ENCODE measurements at regions of chr19 and their contacts with region 1.

Region 1: DNA sequence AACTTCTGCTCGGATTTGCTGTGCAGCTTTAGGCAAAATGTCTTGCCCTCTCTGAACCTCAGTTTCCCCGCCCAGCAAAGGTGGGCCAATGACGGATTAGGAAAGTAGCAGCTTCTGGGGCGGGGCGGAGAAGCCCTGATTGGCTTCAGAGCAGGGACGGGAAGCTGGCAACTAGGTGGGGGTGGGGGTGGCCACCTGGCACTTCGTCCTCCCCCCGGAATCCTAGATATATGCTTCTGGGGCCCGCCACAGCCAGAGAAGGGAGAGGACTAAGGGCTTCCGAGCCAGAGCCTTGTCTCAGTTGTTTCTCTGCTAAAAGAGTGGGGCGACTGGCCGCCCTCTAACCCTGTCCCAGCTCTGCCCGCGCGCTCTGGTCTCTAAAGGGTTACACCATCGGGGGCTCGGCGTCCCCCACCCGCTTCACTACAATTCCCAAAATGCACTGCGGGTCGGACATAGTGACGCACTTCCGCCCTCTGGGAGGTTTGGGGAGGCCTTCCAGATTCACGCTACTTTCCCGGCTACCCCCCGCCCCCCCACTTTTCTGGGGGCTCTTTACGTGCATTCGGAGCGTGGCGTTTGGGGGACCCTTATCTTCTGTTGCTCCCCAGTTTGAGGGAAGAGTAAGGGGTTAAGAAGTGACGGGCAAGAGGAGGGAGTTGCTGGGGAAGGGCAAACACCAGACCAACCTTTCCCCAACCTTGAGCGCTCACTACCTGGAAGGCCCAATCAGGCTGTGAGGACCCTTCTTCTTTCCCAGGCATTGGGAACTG is 672 bp upstream of the IRF2BP1 start:
- DNase-seq: peak; percentile 97
- H3K4me3 Mint-ChIP-seq: peak overlapping the region; percentile 97
- H3K27ac Mint-ChIP-seq: peak overlapping the region; percentile 98
- H3K4me1 Mint-ChIP-seq: peaks cover 10% of the 10 kb centered on the region
- H3K27me3 Mint-ChIP-seq: no peaks in the 10 kb centered on the region
- CTCF ChIP-seq: no peak

Region 2: GRCh38 chr19:45817010-45817724 is 69.4 kb before region 1 on chr19:
- CTCF ChIA-PET with region 1: interaction called, 6 read pairs
- POLR2A ChIA-PET with region 1: no interaction called
- intact Hi-C with region 1: loop called (anchors 1 kb)
- DNase-seq: peak; percentile 93
- H3K4me3 Mint-ChIP-seq: no peak overlapping the region
- H3K27ac Mint-ChIP-seq: no peak overlapping the region
- H3K4me1 Mint-ChIP-seq: no peaks in the 10 kb centered on the region
- H3K27me3 Mint-ChIP-seq: no peaks in the 10 kb centered on the region
- CTCF ChIP-seq: peak; percentile 96

Region 3: GRCh38 chr19:45862564-45863334 is 23.9 kb before region 1 on chr19 and contains the start of gene SYMPK:
- CTCF ChIA-PET with region 1: interaction called, 5 read pairs
- POLR2A ChIA-PET with region 1: interaction called, 34 read pairs
- intact Hi-C with region 1: no loop called
- DNase-seq: peak; percentile 99
- H3K4me3 Mint-ChIP-seq: peak within 1 kb of the TSS; percentile 90
- H3K27ac Mint-ChIP-seq: peak within 1 kb of the TSS; percentile 86
- H3K4me1 Mint-ChIP-seq: peaks cover 10% of the 10 kb centered on the region
- H3K27me3 Mint-ChIP-seq: peaks cover 50% of the 10 kb centered on the region
- CTCF ChIP-seq: no peak
- total RNA-seq, gene SYMPK: 77.4 and 86.2 TPM in 2 replicates

Region 4: GRCh38 chr19:45902651-45903625 is 16.3 kb after region 1 on chr19:
- CTCF ChIA-PET with region 1: interaction called, 8 read pairs
- POLR2A ChIA-PET with region 1: interaction called, 46 read pairs
- intact Hi-C with region 1: no loop called
- DNase-seq: peak; percentile 98
- H3K4me3 Mint-ChIP-seq: peak overlapping the region; percentile 98
- H3K27ac Mint-ChIP-seq: no peak overlapping the region
- H3K4me1 Mint-ChIP-seq: peaks cover 6% of the 10 kb centered on the region
- H3K27me3 Mint-ChIP-seq: no peaks in the 10 kb centered on the region
- CTCF ChIP-seq: no peak

Measured in MCF 10A (cell line).